PC-9 (cell line): ENCODE measurements at regions of chr18 and their contacts with region 1.

Region 1: DNA sequence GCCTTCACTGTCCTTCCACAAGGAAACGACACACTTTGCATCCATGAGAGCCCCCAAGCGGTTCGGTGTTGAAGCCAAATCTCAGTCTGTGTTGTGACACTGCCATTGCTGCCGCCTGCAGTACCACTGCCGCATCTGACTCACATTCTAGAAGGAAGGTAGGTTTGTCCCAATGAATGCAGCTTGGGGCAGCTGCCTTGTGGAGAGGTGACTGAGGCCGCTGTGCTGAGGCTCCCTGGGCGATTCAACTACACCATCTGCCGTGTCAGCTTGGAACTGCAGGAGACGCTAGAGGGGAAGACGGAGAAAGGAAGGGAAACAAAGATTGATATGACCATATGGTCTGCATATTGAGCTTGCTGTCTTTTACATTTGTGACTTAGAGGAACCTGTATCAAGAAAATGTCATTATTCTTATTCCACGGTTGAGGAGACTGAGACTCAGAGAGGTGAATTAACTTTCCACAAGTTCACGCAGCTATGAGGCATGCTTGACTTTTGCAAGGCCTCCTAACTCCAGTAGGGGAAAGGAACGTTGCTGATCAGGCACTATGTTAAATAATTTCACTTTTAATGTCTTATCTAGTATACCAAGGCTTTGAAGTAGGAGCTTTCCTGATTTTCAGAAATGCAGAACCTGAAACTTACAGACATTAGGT is 43.5 kb upstream of the LMAN1 start:
- DNase-seq: peak; percentile 75 to 89
- H3K4me3 ChIP-seq: no peak overlapping the region
- H3K27ac ChIP-seq: no peak overlapping the region
- H3K4me1 ChIP-seq: no peaks in the 10 kb centered on the region
- H3K27me3 ChIP-seq: no peaks in the 10 kb centered on the region
- CTCF ChIP-seq: peak; percentile 95

Region 2: GRCh38 chr18:58768293-58768974 is 634.1 kb before region 1 on chr18:
- CTCF ChIA-PET with region 1: interaction called, 5 read pairs
- POLR2A ChIA-PET with region 1: no interaction called
- intact Hi-C with region 1: loop called (anchors 2 kb)
- DNase-seq: peak in 1 of 2 experiments; percentile 69
- H3K4me3 ChIP-seq: peak overlapping the region; percentile 47; the same call in 1 of the 2 replicates
- H3K27ac ChIP-seq: no peak overlapping the region
- H3K4me1 ChIP-seq: no peaks in the 10 kb centered on the region
- H3K27me3 ChIP-seq: 0 out of 2 replicates have a peak, but pooled peaks cover 3% of the 10 kb centered on the region
- CTCF ChIP-seq: peak; percentile 84

Region 3: DNA sequence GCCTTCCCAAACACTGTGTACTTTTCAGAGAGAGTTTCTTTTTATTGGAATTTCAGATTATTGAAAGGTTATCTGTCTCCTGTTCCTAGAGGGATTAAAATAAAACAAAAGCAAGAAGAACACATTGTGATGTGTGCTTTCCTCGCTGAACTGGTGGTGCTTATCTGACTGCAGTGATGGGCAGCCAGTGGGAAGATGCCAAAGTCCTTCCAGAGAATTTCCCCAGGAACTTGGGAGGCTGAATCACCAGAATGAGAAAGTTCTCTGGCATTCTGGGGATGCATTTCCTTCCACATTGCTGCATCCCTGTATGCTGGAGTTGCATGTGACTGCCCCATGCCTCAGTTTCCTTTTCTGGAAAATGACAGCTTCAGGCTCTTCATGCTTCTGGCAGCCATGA is 316.8 kb before region 1 on chr18:
- CTCF ChIA-PET with region 1: no interaction called
- POLR2A ChIA-PET with region 1: no interaction called
- intact Hi-C with region 1: loop called (anchors 2 kb)
- DNase-seq: no peak
- H3K4me3 ChIP-seq: no peak overlapping the region
- H3K27ac ChIP-seq: no peak overlapping the region
- H3K4me1 ChIP-seq: no peaks in the 10 kb centered on the region
- H3K27me3 ChIP-seq: peaks cover 32% of the 10 kb centered on the region
- CTCF ChIP-seq: no peak

Region 4: GRCh38 chr18:59249205-59249774 is 153.3 kb before region 1 on chr18:
- CTCF ChIA-PET with region 1: interaction called, 3 read pairs
- POLR2A ChIA-PET with region 1: no interaction called
- intact Hi-C with region 1: loop called (anchors 2 kb)
- DNase-seq: peak; percentile 31 to 60
- H3K4me3 ChIP-seq: no peak overlapping the region
- H3K27ac ChIP-seq: no peak overlapping the region
- H3K4me1 ChIP-seq: no peaks in the 10 kb centered on the region
- H3K27me3 ChIP-seq: peaks cover 34% of the 10 kb centered on the region
- CTCF ChIP-seq: peak; percentile 86

Region 5: DNA sequence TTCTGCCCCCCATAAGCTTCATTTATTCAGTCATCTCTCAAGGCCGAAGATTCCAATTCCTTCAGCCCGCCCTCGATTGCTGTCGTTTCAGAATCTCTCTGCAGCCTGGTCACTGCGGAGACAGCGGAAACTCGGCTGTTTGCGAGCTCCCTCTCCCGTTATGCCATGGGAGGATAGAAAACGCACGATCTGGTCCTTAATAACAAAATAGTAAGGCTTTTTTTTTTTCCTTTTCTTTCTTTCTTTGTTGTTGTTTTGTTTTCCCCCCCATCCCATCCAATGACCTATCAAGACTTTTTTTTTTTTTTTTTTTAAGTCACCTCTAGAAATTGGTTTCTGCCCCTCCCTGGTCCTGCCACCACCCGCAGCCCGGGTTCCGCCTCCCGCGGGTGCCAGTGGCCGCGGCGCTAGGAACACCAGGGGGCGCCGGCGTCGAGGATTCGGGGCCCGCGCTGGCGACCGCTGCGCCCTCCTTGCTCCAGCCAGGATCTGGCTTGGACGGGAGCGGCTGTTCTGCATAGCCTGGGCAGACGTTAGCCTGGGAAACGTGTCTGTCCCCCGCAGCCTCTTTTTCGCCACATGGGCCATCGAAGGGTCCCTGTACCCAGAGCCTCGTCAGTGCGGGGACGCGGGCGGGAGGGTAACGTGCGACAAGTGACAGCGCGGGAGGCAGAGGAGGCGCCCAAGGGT is 94.2 kb before region 1 on chr18:
- CTCF ChIA-PET with region 1: interaction called, 26 read pairs
- POLR2A ChIA-PET with region 1: no interaction called
- intact Hi-C with region 1: loop called (anchors 2 kb)
- DNase-seq: peak in 1 of 2 experiments; percentile 73
- H3K4me3 ChIP-seq: peak overlapping the region; percentile 44; the same call in 1 of the 2 replicates
- H3K27ac ChIP-seq: no peak overlapping the region
- H3K4me1 ChIP-seq: no peaks in the 10 kb centered on the region
- H3K27me3 ChIP-seq: no peaks in the 10 kb centered on the region
- CTCF ChIP-seq: peak; percentile 78

Region 6: GRCh38 chr18:59358712-59359575 is 43.6 kb before region 1 on chr18 and contains the start of gene LMAN1:
- CTCF ChIA-PET with region 1: no interaction called
- POLR2A ChIA-PET with region 1: interaction called, 3 read pairs
- intact Hi-C with region 1: loop called (anchors 5 kb)
- DNase-seq: peak; percentile 80 to 91
- H3K4me3 ChIP-seq: peak within 1 kb of the TSS; percentile 95
- H3K27ac ChIP-seq: peak within 1 kb of the TSS; percentile 91
- H3K4me1 ChIP-seq: peaks cover 24% of the 10 kb centered on the region
- H3K27me3 ChIP-seq: no peaks in the 10 kb centered on the region
- CTCF ChIP-seq: no peak
- total RNA-seq, gene LMAN1: 77.3 and 78.3 TPM in 2 replicates

Region 7: GRCh38 chr18:59446012-59446411 is 43.5 kb after region 1 on chr18:
- CTCF ChIA-PET with region 1: no interaction called
- POLR2A ChIA-PET with region 1: no interaction called
- intact Hi-C with region 1: no loop called
- DNase-seq: no peak
- H3K4me3 ChIP-seq: no peak overlapping the region
- H3K27ac ChIP-seq: no peak overlapping the region
- H3K4me1 ChIP-seq: no peaks in the 10 kb centered on the region
- H3K27me3 ChIP-seq: 0 out of 2 replicates have a peak, but pooled peaks cover 7% of the 10 kb centered on the region
- CTCF ChIP-seq: no peak

Region 8: GRCh38 chr18:59733421-59733820 is 330.9 kb after region 1 on chr18:
- CTCF ChIA-PET with region 1: no interaction called
- POLR2A ChIA-PET with region 1: no interaction called
- intact Hi-C with region 1: no loop called
- DNase-seq: no peak
- H3K4me3 ChIP-seq: no peak overlapping the region
- H3K27ac ChIP-seq: no peak overlapping the region
- H3K4me1 ChIP-seq: peaks cover 31% of the 10 kb centered on the region
- H3K27me3 ChIP-seq: no peaks in the 10 kb centered on the region
- CTCF ChIP-seq: no peak